ENCODE measurements at regions of chr13 and their contacts with region 1.

Region 1: GRCh38 chr13:113393563-113394338 is 29.8 kb upstream of the GRTP1 start:
- DNase-seq: peak in 1 of 2 donors; percentile 80
- H3K4me3 ChIP-seq: peak overlapping the region; percentile 59 to 61
- H3K27ac ChIP-seq: peak overlapping the region; percentile 58
- H3K4me1 ChIP-seq: peaks cover 8% of the 10 kb centered on the region
- H3K27me3 ChIP-seq: no peaks in the 10 kb centered on the region
- CTCF ChIP-seq: peak; percentile 71 to 78 (median 73)
- POLR2A ChIP-seq: no peak

Region 2: DNA sequence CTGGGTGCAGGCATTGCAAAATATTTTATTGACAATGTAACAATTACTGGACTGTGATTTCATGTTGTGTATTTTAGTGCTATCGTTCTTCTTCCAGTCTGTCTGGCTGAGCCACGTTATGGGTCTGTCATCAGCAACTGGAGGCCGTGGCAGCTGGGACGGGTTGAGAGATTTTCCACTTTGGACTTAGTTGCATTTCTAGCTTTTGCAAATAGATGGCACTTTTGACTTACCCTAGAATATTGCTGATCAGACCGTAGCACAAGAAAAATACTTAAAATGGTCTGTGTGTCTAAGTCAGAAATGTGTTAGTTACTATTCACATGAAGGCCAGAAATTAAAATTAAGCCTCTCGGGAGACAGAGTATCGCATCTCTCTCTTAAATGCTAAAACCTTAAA is 1862.2 kb before region 1 on chr13:
- intact Hi-C with region 1: no loop called
- DNase-seq: no peak
- H3K4me3 ChIP-seq: no peak overlapping the region
- H3K27ac ChIP-seq: no peak overlapping the region
- H3K4me1 ChIP-seq: no peaks in the 10 kb centered on the region
- H3K27me3 ChIP-seq: no peaks in the 10 kb centered on the region
- CTCF ChIP-seq: no peak
- POLR2A ChIP-seq: no peak

Region 3: GRCh38 chr13:112942689-112943308 is 451.0 kb before region 1 on chr13:
- intact Hi-C with region 1: loop called (anchors 10 kb)
- DNase-seq: peak in 1 of 2 donors; percentile 89
- H3K4me3 ChIP-seq: peak overlapping the region; percentile 43 to 54
- H3K27ac ChIP-seq: peak overlapping the region; percentile 58
- H3K4me1 ChIP-seq: peaks cover 10% of the 10 kb centered on the region
- H3K27me3 ChIP-seq: no peaks in the 10 kb centered on the region
- CTCF ChIP-seq: peak; percentile 72 to 88 (median 76)
- POLR2A ChIP-seq: no peak